KBM-7 (cell line): ENCODE measurements at regions of chr13 and their contacts with region 1.

Region 1: DNA sequence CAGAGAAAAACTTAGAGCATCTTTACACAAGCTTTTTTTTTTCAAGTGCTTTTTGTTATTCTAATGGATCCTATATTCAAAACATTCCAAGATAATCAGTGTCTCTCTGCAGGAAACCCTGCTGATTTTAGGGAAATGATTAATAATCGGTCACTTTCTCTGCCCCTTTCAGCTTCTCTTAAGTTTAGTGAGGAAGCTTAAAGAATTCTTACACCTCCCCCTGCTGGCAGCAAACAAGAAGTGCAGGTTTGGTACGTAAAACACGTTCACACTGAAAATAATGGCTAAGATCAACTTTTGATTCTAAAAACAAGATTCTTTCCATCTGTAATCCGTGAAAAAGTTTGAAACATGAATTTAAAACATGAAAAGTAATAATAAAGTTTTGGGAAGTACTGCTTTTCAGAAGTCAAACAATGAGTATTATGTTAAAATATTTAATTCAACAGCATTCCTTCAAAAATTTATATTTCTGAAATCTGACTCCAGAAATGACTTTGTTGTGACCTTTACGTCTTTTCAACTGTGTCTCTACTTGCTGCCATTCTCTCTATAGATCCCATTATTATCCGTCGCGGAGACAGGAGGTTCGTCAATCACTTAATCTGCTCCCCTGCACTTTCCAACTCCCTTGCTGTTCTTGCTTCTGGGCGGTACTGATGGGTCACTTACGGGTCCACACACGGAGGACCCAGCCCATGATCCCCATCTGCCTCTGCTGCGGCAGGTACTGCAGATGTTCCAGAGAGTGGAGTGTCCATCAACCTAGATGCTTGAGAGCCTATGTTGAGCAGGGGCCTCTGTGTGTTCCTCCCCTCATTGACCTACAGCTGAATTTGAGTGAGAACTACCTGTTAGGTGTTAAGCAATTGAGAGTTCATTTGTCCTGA is 203.1 kb upstream of the EDNRB start:
- DNase-seq: peak; percentile 65

Region 2: DNA sequence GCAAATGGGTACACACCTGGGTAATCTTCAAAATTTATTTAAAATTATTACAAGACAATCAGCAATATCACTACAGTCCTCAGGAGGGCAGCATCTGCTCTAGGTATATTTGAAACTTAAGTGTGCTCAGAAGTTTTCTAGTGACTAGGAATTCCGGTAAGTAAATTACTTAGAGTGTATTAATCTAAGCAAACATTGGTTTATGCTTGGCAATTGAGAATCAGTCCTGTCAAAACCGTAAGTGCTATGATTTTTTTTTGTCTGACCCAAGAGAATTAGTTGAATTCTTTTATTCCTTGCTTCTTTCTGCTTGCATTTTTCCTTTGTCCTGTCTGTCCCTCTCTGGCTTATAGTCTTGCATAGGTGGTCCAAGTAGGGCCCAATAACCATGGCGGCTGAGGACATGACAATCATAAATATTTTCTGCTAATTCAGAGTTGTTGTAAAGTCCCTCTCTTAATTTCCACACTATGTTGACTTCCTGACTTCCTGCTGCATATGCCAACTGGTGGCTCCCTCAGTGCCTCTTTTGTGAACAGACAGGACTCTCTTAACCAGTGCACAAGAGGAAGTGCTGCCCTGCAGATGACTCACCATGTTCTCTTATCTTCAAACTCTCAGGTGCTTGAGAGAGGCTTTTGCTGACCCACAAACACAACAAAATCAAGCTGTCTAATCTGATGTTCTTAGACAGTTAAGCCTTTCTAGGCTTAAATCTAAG is 342.0 kb before region 1 on chr13:
- in situ Hi-C with region 1: loop called (anchors 25 kb)
- DNase-seq: peak; percentile 89

Region 3: DNA sequence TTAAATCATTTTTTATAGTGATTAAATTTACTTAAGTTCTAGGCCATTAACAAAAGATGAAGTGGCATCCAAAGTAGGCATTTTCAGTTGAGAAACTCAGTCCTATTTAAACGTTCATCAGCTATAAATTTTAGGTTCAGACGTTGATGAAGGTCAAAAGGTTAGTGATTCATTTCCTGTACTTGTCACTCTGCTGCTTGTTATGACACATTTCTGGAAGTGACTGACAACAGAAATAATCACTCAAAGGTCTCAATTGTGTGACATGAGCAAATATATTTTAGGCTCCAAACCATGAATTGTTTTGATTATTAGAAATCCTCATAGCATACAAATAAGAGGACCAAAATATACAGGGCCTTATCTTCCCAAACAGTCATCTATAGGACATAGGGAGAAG is 192.8 kb before region 1 on chr13:
- in situ Hi-C with region 1: no loop called
- DNase-seq: no peak